Stomach (tissue), 19 donors: ENCODE measurements at regions of chrX and their contacts with region 1.

Region 1: GRCh38 chrX:24081661-24082264 is 27.0 kb downstream of the EIF2S3 start:
- DNase-seq: peak; percentile 64 to 76
- H3K4me3 ChIP-seq: no peak overlapping the region
- H3K27ac ChIP-seq: no peak overlapping the region
- H3K4me1 ChIP-seq: no peaks in the 10 kb centered on the region
- H3K27me3 ChIP-seq: no peaks in the 10 kb centered on the region
- CTCF ChIP-seq: peak in 4 of 7 experiments; percentile 12 to 42 (median 16)
- EP300 ChIP-seq: no peak
- POLR2A ChIP-seq: no peak

Region 2: GRCh38 chrX:23548164-23548563 is 533.6 kb before region 1 on chrX:
- intact Hi-C with region 1: no loop called
- DNase-seq: no peak
- H3K4me3 ChIP-seq: no peak overlapping the region
- H3K27ac ChIP-seq: no peak overlapping the region
- H3K4me1 ChIP-seq: no peaks in the 10 kb centered on the region
- H3K27me3 ChIP-seq: no peaks in the 10 kb centered on the region
- CTCF ChIP-seq: no peak
- EP300 ChIP-seq: no peak
- POLR2A ChIP-seq: no peak

Region 3: DNA sequence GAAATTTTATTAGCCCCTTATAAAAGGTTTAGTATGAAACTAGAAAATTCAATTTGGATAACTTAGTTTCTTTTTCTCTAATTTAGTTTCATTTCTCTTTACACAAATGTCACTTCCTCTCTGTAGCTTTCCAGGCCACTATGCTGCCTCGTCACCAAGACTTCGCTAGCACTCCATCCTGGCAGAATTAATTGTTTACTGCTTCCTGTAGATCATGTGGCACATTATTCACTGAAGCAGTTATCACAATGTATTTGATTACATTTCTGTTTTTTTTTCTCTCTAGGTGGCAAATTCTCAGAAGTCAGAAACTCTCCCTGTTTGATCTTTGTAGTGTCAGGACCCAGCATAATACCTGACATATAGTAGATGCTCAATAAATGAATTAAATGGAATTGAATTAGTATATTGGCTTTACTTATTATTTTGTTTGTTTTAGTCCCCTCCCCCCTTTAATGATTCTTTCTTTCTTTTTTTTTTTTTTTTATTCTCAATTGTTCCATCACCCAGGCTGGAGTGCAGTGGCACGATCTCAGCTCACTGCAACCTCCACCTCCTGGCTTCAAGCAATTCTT is 308.1 kb before region 1 on chrX:
- intact Hi-C with region 1: no loop called
- DNase-seq: peak in 1 of 2 donors; percentile 61
- H3K4me3 ChIP-seq: no peak overlapping the region
- H3K27ac ChIP-seq: peak overlapping the region in 4 of 5 donors; percentile 49 to 71 (median 56)
- H3K4me1 ChIP-seq: peaks cover 0 to 5% (median 0%) of the 10 kb centered on the region in 4 donors
- H3K27me3 ChIP-seq: no peaks in the 10 kb centered on the region
- CTCF ChIP-seq: no peak
- EP300 ChIP-seq: no peak
- POLR2A ChIP-seq: no peak

Region 4: GRCh38 chrX:24231131-24231540 is 149.4 kb after region 1 on chrX:
- intact Hi-C with region 1: loop called (anchors 10 kb)
- DNase-seq: peak in 1 of 2 donors; percentile 52
- H3K4me3 ChIP-seq: no peak overlapping the region
- H3K27ac ChIP-seq: no peak overlapping the region
- H3K4me1 ChIP-seq: peaks cover 0 to 9% (median 0%) of the 10 kb centered on the region in 4 donors
- H3K27me3 ChIP-seq: no peaks in the 10 kb centered on the region
- CTCF ChIP-seq: no peak
- EP300 ChIP-seq: no peak
- POLR2A ChIP-seq: no peak